Right lobe of liver (tissue), 6 donors: ENCODE measurements at regions of chr12 and their contacts with region 1.

Region 1: DNA sequence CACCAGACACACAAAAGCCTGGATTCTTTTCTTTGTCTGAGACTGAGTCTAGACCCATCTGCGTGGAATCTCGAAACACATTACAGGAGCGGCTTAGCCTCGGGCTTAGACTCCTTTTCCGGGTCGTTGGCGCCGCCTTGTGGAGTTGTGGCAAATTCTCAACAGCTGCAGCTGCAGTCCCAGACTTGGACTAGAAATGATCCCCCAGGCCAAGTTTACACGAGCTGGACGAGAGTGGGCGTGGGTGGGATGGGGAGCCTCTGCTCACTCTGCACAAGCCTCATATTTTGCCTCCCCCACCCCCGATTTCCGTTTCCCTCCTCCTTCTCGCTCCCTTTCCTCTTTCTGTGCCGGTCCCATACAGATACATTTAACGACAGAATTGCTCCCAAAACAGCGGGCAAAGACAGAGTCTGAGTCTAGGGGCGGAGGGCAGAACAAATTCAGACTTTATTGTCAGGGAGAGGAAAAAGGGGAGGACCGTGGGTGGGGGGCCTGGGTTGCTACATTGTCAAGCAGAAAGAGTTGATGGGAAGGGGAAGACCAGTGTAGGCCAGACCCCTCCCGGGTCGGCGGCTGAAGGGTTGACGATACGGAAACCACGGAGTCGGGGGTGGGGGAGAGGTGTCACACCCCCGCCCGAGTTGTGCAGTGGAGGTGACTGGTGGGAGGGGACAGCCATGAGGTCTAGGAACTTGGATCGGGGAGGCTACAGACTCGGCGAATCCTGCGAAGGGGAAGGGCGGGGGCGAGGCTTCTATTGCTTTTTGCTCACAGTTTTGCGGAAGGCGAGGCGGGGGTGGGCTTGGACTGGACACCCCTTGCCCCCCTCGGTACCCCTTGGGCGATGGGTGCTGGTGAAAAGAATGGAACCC is 4.7 kb upstream of the GPR84 start:
- DNase-seq: peak; percentile 86 to 89 (median 88)
- ATAC-seq: peak; percentile 77 to 85 (median 82)
- H3K4me3 ChIP-seq: peak overlapping the region in 2 of 3 donors; percentile 7 to 15
- H3K27ac ChIP-seq: no peak overlapping the region
- H3K4me1 ChIP-seq: peaks cover 0 to 12% (median 0%) of the 10 kb centered on the region in 4 donors
- H3K27me3 ChIP-seq: no peaks in the 10 kb centered on the region
- CTCF ChIP-seq: peak; percentile 67 to 75 (median 74)
- POLR2A ChIP-seq: no peak

Region 2: GRCh38 chr12:54220092-54220557 is 148.8 kb before region 1 on chr12:
- intact Hi-C with region 1: loop called in 1 of 2 experiments (anchors 10 kb)
- DNase-seq: peak in 1 of 3 donors; percentile 60
- ATAC-seq: peak; percentile 74 to 83 (median 78)
- H3K4me3 ChIP-seq: no peak overlapping the region
- H3K27ac ChIP-seq: no peak overlapping the region
- H3K4me1 ChIP-seq: peaks cover 0 to 8% (median 0%) of the 10 kb centered on the region in 4 donors
- H3K27me3 ChIP-seq: peaks cover 7 to 9% of the 10 kb centered on the region in 2 donors
- CTCF ChIP-seq: peak; percentile 65 to 67 (median 66)
- POLR2A ChIP-seq: no peak

Region 3: DNA sequence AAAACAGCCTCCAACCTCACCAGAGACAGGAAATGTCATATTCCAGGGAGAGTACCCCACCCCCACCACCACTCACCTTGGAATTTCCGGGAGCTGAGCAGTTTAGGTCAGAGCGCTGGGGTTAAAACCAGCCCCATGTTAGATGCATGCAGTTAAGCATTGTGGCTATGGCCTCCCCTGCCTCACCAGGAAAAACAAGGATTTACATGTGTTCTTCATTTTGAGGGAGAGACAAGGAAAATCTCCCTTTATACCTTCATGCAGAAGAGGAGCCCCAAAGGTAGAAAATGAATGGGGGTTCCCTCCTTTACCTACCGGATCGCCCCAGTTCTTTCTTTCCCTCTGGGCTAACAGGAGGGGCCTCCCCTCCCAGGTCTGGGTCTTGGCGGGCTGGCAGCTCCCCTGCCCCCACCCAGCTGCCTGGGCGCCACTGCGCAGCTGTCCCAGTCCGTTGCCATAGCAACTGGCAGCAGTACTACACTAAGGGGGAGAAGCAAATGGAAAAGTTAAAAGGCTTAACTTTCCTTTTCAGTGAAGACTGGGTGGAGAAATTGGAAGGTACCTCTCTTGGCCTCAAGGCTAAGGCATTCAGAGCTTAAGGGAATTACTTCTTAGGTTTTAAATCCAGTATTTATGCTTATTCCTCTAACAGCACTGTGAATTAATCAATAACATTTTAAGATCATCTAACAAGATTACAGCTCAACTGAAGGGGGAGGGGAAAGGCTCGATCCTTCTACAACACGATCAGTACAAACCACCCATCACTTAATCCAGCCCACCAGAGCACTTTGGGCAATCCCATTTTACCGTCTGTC is 109.5 kb before region 1 on chr12:
- intact Hi-C with region 1: loop called in 1 of 2 experiments (anchors 10 kb)
- DNase-seq: peak; percentile 73 to 76 (median 75)
- ATAC-seq: peak; percentile 94 to 96 (median 95)
- H3K4me3 ChIP-seq: peak overlapping the region; percentile 18 to 50 (median 44)
- H3K27ac ChIP-seq: peak overlapping the region in 2 of 3 donors; percentile 2 to 9
- H3K4me1 ChIP-seq: peaks cover 0 to 27% (median 4%) of the 10 kb centered on the region in 4 donors
- H3K27me3 ChIP-seq: no peaks in the 10 kb centered on the region
- CTCF ChIP-seq: no peak
- POLR2A ChIP-seq: no peak

Region 4: DNA sequence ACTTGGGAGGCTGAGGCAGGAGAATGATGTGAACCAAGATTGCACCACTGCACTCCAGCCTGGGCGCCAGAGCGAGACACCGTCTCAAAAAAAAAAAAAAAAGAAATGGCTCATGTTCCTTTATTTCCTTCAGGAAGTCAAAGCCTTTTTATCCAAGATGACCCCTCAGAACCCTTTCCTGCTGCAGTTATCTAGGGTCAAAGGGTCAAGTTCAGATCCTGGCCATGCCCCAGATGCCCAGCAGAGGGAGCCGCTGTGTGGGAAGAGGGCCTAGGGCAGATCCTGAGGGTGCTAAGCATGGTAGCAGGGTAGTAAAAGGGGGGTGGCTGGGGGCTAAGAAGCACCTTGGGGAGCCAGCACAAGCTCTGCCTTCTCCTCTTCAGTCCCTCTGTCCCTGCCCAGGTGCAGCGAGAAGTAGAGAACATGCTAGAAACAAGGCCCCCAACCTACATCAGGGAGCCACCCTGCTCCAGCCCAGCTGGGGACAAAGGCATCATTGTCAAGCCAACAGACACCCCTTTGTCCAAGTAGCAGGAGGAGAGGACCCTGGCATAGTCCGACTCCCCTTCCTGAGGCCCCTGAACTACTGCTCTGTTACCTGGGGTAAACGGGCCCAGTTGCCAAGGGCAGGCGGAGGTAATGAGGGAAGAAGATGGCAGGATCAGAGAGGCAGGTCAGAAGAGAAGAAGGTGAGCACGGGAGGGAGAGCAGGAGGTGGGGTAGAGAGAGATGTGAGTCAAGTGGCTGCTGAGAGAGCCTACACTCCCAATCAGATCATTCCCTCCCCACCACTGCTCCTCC is 74.6 kb before region 1 on chr12:
- intact Hi-C with region 1: loop called (anchors 5 to 10 kb)
- DNase-seq: peak; percentile 73 to 77 (median 74)
- ATAC-seq: peak; percentile 89 to 95 (median 92)
- H3K4me3 ChIP-seq: no peak overlapping the region
- H3K27ac ChIP-seq: no peak overlapping the region
- H3K4me1 ChIP-seq: no peaks in the 10 kb centered on the region
- H3K27me3 ChIP-seq: no peaks in the 10 kb centered on the region
- CTCF ChIP-seq: peak; percentile 64 to 80 (median 78)
- POLR2A ChIP-seq: no peak